ENCODE measurements at regions of chr6 and their contacts with region 1.

Region 1: DNA sequence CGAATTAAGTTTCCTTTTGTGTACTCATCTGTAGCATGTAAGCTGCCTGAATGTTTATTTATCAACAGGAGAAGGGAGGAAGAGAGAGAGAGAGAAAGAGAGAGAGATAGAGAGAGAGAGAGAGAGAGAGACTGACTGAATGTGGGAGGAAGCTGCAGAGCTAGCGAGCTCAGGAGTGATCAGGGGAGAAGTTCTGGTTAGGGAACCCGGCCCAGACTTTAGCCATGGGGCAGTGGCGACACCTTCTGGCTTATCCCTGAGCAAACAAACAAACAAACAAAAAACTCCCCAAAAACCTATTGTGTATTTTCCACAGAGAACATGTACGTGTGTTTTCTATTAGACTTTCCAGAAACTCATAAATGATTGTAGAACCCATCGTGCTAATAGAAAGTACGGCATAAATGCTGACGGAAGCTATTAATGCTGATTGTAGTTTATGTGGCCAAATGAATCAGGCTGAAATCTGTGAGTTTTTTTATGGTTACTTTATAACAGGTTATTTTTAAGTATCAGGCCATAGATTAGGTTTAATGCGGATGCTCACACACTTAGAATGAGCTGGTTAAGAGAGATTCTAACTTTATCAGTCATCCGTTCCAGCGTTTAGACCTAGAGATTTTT is 92.8 kb downstream of the CLIC5 start:
- DNase-seq: peak; percentile 55
- H3K4me3 Mint-ChIP-seq: peak overlapping the region; percentile 43
- H3K27ac Mint-ChIP-seq: peak overlapping the region; percentile 82
- H3K4me1 Mint-ChIP-seq: peaks cover 57% of the 10 kb centered on the region
- H3K27me3 Mint-ChIP-seq: peaks cover 4% of the 10 kb centered on the region

Region 2: GRCh38 chr6:44593539-44593944 is 1329.3 kb before region 1 on chr6:
- intact Hi-C with region 1: loop called (anchors 1 kb)
- DNase-seq: peak; percentile 10
- H3K4me3 Mint-ChIP-seq: no peak overlapping the region
- H3K27ac Mint-ChIP-seq: no peak overlapping the region
- H3K4me1 Mint-ChIP-seq: peaks cover 5% of the 10 kb centered on the region
- H3K27me3 Mint-ChIP-seq: peaks cover 8% of the 10 kb centered on the region

Region 3: DNA sequence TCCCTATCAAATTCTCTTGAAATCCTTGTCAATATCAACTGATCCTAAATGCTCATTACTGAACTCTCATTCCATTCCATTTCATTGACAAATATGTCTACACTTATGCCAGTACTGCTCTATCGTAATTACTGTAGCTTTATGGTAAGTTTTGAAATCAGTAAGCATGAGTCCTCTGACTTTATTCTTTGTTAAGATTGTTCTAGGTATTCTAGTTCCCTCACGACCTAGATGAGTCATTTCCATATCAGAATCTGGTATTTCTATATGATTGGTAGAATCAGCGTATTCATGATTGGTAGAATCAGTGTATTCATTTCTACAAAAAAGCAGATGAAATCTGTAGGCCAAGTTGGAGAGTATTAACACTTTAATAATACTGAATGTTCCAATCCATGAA is 913.3 kb before region 1 on chr6:
- intact Hi-C with region 1: loop called (anchors 1 kb)
- DNase-seq: no peak
- H3K4me3 Mint-ChIP-seq: no peak overlapping the region
- H3K27ac Mint-ChIP-seq: peak overlapping the region; percentile 67
- H3K4me1 Mint-ChIP-seq: peaks cover 30% of the 10 kb centered on the region
- H3K27me3 Mint-ChIP-seq: no peaks in the 10 kb centered on the region

Region 4: DNA sequence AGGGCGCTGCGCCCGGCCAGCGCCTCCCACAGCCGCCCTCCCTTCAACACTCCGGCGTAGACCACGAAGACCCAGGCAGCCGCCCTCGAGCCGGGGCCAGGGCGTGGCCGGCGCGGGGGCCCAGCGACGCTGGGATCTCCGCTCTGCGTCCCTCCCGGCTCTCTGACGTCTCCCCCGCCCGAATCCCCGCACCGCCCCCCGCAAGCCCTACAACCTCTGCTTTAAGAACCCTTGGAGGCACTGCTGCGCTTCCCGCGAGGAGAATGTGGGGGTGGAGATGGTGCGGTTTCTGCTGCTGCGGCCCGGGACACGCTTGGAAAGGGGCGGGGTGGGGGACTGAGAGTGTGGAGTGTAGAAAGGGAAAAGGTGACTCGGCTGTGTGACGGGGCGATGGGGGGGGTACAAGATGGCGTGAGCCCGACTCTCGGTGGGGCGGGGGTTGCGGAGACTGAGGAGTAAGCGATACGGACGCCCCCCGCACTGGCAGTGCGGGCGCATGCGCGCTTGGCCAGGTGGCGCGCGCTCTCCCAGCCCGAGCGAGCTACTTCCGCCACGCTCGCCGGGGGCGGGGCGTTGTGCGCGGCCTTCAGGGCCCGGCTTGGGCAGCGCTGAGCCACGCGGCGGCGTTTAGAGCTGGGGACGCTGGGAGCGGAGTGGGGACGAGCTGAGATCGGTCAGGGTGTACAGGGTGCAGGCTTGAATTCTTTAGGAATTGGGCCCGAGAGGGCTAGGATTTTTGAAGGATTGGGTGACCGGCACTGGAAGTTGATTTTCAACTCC is 545.1 kb before region 1 on chr6 and contains the start of gene SUPT3H:
- intact Hi-C with region 1: loop called (anchors 1 kb)
- DNase-seq: peak; percentile 88
- H3K4me3 Mint-ChIP-seq: peak within 1 kb of the TSS; percentile 96
- H3K27ac Mint-ChIP-seq: peak within 1 kb of the TSS; percentile 100
- H3K4me1 Mint-ChIP-seq: peaks cover 27% of the 10 kb centered on the region
- H3K27me3 Mint-ChIP-seq: no peaks in the 10 kb centered on the region
- total RNA-seq, gene SUPT3H: 11.0 and 11.7 TPM in 2 replicates

Region 5: GRCh38 chr6:45584127-45584526 is 338.7 kb before region 1 on chr6:
- intact Hi-C with region 1: loop called (anchors 1 kb)
- DNase-seq: no peak
- H3K4me3 Mint-ChIP-seq: peak overlapping the region; percentile 27
- H3K27ac Mint-ChIP-seq: peak overlapping the region; percentile 84
- H3K4me1 Mint-ChIP-seq: peaks cover 52% of the 10 kb centered on the region
- H3K27me3 Mint-ChIP-seq: no peaks in the 10 kb centered on the region

Region 6: GRCh38 chr6:45801471-45802289 is 121.2 kb before region 1 on chr6:
- intact Hi-C with region 1: loop called (anchors 1 kb)
- DNase-seq: peak; percentile 33
- H3K4me3 Mint-ChIP-seq: peak overlapping the region; percentile 2
- H3K27ac Mint-ChIP-seq: no peak overlapping the region
- H3K4me1 Mint-ChIP-seq: no peaks in the 10 kb centered on the region
- H3K27me3 Mint-ChIP-seq: no peaks in the 10 kb centered on the region

Measured in activated T-helper 1 cell treated with anti-CD3 and anti-CD28 coated beads, Interleukin-12 subunit alpha, Interleukin-12 subunit beta, Interleukin-2, Interleukin-4 antibody, amounts not matched to agents 30 ng/mL and 10 ng/mL and 1 ng/mL, durations not matched to agents 14 hours and 24 hours and 36 hours (primary cell).